Sigmoid colon (tissue), 7 donors: ENCODE measurements at regions of chr12 and their contacts with region 1.

Region 1: DNA sequence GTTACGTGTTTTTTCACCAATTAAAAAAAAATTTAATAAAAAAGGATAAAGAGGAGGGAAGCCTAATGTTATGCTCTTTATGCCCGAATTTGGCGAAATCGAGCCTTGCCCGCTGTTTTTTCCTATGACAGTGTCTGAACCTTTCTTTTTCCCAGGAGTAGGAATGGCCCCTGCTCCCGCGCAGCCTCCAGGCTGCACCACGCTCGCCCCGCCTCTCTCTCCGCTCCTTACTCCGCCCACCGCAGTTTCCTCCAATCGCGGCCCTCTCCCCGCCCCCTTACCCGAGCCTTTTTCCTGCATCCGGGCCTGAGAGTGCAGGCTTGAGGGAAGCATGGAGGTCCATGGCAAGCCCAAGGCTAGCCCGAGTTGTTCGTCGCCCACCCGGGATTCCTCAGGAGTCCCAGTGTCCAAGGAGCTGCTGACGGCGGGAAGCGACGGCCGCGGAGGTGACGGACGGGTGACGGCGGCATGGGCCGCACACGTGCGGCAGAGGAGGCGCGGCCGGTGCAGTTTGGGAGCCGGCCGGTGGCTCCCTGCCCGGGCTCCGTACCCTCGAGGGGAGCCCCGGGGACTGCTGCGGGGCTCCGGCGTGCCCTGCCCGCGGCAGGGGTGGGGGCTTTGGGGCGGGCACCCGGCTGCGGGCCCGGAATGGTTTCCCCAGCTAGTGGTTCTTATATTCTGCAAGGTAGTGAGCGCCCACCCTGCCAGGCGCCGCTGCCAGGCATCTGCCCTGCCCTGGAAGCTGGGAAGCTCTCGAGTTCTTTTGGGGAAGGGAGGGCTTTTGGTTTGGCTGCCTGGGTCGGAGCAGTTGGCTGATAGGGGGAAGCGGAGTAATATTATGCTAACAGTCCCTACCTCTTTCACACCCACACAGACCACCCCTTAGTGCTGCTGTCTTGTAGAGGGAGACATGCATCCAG is at the start of gene NOPCHAP1:
- DNase-seq: peak; percentile 95
- H3K4me3 ChIP-seq: peak within 1 kb of the TSS; percentile 61 to 89 (median 76)
- H3K27ac ChIP-seq: peak within 1 kb of the TSS; percentile 73 to 78 (median 76)
- H3K4me1 ChIP-seq: peaks cover 0 to 23% (median 14%) of the 10 kb centered on the region in 4 donors
- H3K27me3 ChIP-seq: no peaks in the 10 kb centered on the region
- CTCF ChIP-seq: no peak
- EP300 ChIP-seq: no peak
- POLR2A ChIP-seq: peak; percentile 26 to 54
- total RNA-seq, gene NOPCHAP1: 3.9 to 6.6 (median 6.1) TPM

Region 2: DNA sequence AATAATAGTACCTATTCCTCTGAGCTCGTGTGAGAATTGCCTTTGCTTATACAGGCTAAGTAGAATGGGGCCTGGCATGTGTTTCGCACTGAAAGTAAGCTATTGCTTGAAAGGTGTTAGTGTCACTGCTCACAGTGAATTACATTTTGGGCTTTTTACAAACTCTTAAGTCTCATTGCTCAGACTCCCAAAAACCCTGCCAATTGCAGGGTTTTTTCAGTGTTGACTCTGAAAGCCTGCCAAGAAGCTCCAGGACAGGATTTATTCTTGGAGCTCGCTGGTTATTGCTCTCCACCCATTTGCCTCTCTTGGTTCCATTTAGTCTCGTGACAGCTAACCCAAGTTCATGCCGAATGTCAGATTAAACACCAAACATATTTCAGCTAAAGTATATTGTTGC is 39.6 kb after region 1 on chr12:
- intact Hi-C with region 1: loop called (anchors 5 kb)
- DNase-seq: peak; percentile 76
- H3K4me3 ChIP-seq: no peak overlapping the region
- H3K27ac ChIP-seq: peak overlapping the region; percentile 61 to 74 (median 64)
- H3K4me1 ChIP-seq: peaks cover 0 to 45% (median 41%) of the 10 kb centered on the region in 4 donors
- H3K27me3 ChIP-seq: no peaks in the 10 kb centered on the region
- CTCF ChIP-seq: no peak
- EP300 ChIP-seq: peak in 1 of 4 donors; percentile 51
- POLR2A ChIP-seq: no peak